A549 (cell line): ENCODE measurements at regions of chr13 and their contacts with region 1.

Region 1: GRCh38 chr13:111066544-111066943 is 48.6 kb upstream of the ARHGEF7 start:
- DNase-seq: no peak
- ATAC-seq: no peak
- H3K4me3 ChIP-seq: no peak overlapping the region
- H3K27ac ChIP-seq: no peak overlapping the region
- H3K4me1 ChIP-seq: no peaks in the 10 kb centered on the region
- CTCF ChIP-seq: no peak
- EP300 ChIP-seq: no peak
- POLR2A ChIP-seq: no peak
- RAD21 ChIP-seq: no peak

Region 2: GRCh38 chr13:110685305-110685704 is 381.2 kb before region 1 on chr13:
- CTCF ChIA-PET with region 1: no interaction called
- POLR2A ChIA-PET with region 1: no interaction called
- DNase-seq: no peak
- ATAC-seq: no peak
- H3K4me3 ChIP-seq: no peak overlapping the region
- H3K27ac ChIP-seq: no peak overlapping the region
- H3K4me1 ChIP-seq: no peaks in the 10 kb centered on the region
- CTCF ChIP-seq: no peak
- EP300 ChIP-seq: no peak
- POLR2A ChIP-seq: no peak
- RAD21 ChIP-seq: no peak

Region 3: GRCh38 chr13:111080642-111081041 is 14.1 kb after region 1 on chr13:
- CTCF ChIA-PET with region 1: interaction called, 11 read pairs
- POLR2A ChIA-PET with region 1: no interaction called
- DNase-seq: no peak
- ATAC-seq: no peak
- H3K4me3 ChIP-seq: no peak overlapping the region
- H3K27ac ChIP-seq: no peak overlapping the region
- H3K4me1 ChIP-seq: no peaks in the 10 kb centered on the region
- CTCF ChIP-seq: no peak
- EP300 ChIP-seq: no peak
- POLR2A ChIP-seq: no peak
- RAD21 ChIP-seq: no peak

Region 4: DNA sequence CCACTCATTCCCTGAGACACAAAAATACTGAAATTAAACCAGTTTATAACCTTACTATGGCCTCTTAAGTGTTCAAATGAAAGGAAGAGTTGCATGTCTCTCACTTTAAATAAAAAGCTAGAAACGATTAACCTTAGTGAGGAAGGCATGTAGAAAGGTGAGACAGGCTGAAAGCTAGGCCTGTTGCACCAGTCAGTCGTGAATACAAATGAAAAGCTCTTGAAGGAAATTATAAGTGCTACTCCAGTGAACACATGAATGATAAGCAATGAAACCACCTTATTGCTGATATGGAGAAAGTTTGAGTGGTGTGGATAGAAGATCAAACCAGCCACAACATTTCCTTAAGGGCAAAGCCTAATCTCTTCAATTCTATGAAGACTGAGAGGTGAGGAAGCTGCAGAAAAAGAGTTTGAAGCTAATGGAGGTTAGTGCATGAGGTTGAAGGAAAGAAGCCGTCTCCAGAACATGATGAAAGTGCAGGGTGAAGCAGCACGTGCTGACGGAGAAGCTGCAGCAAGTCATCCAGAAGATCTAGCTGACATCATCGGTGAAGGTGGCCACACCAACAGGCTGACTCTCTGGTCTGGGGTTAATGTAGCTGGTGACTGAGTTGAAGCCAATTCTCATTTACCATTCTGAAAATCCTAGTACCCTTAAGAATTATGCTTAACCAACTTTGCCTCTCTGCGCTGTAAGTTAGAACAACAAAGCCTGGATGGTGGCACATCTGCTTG is 159.4 kb after region 1 on chr13:
- CTCF ChIA-PET with region 1: interaction called, 16 read pairs
- POLR2A ChIA-PET with region 1: no interaction called
- DNase-seq: no peak
- ATAC-seq: no peak
- H3K4me3 ChIP-seq: no peak overlapping the region
- H3K27ac ChIP-seq: no peak overlapping the region
- H3K4me1 ChIP-seq: no peaks in the 10 kb centered on the region
- CTCF ChIP-seq: no peak
- EP300 ChIP-seq: no peak
- POLR2A ChIP-seq: no peak
- RAD21 ChIP-seq: no peak